Natural killer cell (primary cell): ENCODE measurements at regions of chr7 and their contacts with region 1.

Region 1: DNA sequence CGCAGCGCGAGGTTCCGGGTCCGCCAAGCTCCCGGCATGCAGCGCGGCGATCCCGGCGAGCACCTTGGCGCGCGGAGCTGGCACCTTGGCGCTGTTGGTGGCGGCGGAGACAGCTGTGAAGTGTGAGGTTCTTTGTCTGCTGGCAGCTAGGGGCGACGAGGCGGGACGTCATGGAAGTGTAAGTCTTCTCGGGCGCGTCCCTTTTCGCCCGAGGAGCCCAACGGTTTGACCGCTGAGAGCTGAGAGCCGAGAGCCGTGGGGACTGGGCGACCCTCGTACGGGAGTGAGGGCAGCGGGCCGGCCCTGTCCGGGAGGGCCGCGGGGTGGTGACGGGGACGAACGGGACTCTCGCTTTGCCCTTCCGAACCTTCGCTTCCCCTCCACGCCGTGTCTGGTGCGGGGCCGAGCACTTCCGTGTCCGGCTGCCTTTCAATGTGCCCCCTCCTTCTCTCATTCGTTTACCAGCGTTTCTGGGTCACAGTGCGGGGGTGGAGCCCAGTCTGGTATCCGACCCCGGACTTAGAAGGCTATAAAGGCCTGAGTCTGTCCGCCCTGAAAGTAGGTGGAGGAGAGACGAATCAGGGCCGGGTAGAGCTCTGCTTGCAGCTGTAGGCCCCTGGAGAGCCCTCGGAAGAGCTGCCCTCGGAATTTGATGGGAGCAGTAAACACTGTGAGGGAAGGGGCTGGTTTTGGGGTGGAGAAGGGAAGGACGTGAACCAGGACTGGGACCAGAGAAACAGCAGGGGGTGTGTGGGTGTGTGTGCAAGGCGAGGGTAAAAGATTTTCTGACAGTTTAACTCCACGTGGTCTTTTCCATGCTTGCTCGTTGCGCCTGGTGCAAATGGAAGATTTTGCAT is at the start of gene CRCP:
- DNase-seq: peak; percentile 86 to 93
- ATAC-seq: peak; percentile 81 to 93 (median 84)
- H3K4me3 ChIP-seq: peak within 1 kb of the TSS; percentile 69
- H3K4me3 Mint-ChIP-seq: peak within 1 kb of the TSS; percentile 98
- H3K27ac ChIP-seq: peak within 1 kb of the TSS; percentile 83
- H3K27ac Mint-ChIP-seq: peak within 1 kb of the TSS; percentile 99 to 100
- H3K4me1 ChIP-seq: peaks cover 20% of the 10 kb centered on the region
- H3K4me1 Mint-ChIP-seq: peaks cover 42 to 45% of the 10 kb centered on the region in 2 donors
- H3K27me3 ChIP-seq: no peaks in the 10 kb centered on the region
- H3K27me3 Mint-ChIP-seq: no peaks in the 10 kb centered on the region
- CTCF ChIP-seq: peak; percentile 19
- total RNA-seq, gene CRCP: 67.5 to 72.1 (median 68.0) TPM

Region 2: DNA sequence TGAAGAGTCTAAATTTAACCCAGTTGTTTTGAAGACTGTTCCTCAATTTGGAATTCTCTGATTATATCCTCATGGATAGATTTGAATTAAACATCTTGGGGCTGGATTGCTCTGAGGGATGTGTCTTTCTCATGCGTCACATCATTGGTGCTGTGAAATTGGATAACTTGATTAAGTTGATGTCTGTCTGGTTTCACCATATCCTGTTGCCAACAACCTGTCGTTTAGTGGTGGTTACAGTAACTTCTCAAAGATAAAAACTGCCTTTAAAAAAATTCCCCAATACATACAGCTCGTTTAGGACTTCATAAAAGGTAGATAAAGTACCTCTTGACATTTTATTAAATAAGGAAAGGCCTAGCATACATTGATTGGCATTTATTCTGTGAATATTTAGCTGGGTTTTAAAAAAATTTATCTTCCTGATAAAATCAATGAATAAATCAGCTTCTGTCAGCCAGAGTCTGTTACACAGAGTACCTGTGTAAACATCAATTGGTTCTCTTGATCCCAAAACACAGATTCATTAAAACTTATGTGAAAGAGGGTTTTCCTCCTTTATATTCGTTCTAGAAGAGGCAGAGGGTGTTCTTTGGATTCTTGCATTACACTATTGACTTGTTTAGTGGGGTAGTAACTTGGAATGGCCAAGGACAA is 10.2 kb after region 1 on chr7:
- intact Hi-C with region 1: loop called (anchors 1 kb)
- DNase-seq: peak in 1 of 2 donors; percentile 14
- ATAC-seq: peak; percentile 48 to 51 (median 50)
- H3K4me3 ChIP-seq: no peak overlapping the region
- H3K4me3 Mint-ChIP-seq: peak overlapping the region; percentile 68
- H3K27ac ChIP-seq: peak overlapping the region; percentile 85
- H3K27ac Mint-ChIP-seq: peak overlapping the region; percentile 94 to 99
- H3K4me1 ChIP-seq: peaks cover 7% of the 10 kb centered on the region
- H3K4me1 Mint-ChIP-seq: peaks cover 37 to 41% of the 10 kb centered on the region in 2 donors
- H3K27me3 ChIP-seq: no peaks in the 10 kb centered on the region
- H3K27me3 Mint-ChIP-seq: no peaks in the 10 kb centered on the region
- CTCF ChIP-seq: no peak

Region 3: GRCh38 chr7:66150471-66150870 is 35.5 kb after region 1 on chr7:
- intact Hi-C with region 1: loop called (anchors 1 kb)
- DNase-seq: peak in 1 of 2 donors; percentile 17
- ATAC-seq: no peak
- H3K4me3 ChIP-seq: no peak overlapping the region
- H3K4me3 Mint-ChIP-seq: no peak overlapping the region
- H3K27ac ChIP-seq: peak overlapping the region; percentile 42
- H3K27ac Mint-ChIP-seq: peak overlapping the region; percentile 95 to 96
- H3K4me1 ChIP-seq: peaks cover 36% of the 10 kb centered on the region
- H3K4me1 Mint-ChIP-seq: peaks cover 41 to 42% of the 10 kb centered on the region in 2 donors
- H3K27me3 ChIP-seq: no peaks in the 10 kb centered on the region
- H3K27me3 Mint-ChIP-seq: no peaks in the 10 kb centered on the region
- CTCF ChIP-seq: no peak

Region 4: DNA sequence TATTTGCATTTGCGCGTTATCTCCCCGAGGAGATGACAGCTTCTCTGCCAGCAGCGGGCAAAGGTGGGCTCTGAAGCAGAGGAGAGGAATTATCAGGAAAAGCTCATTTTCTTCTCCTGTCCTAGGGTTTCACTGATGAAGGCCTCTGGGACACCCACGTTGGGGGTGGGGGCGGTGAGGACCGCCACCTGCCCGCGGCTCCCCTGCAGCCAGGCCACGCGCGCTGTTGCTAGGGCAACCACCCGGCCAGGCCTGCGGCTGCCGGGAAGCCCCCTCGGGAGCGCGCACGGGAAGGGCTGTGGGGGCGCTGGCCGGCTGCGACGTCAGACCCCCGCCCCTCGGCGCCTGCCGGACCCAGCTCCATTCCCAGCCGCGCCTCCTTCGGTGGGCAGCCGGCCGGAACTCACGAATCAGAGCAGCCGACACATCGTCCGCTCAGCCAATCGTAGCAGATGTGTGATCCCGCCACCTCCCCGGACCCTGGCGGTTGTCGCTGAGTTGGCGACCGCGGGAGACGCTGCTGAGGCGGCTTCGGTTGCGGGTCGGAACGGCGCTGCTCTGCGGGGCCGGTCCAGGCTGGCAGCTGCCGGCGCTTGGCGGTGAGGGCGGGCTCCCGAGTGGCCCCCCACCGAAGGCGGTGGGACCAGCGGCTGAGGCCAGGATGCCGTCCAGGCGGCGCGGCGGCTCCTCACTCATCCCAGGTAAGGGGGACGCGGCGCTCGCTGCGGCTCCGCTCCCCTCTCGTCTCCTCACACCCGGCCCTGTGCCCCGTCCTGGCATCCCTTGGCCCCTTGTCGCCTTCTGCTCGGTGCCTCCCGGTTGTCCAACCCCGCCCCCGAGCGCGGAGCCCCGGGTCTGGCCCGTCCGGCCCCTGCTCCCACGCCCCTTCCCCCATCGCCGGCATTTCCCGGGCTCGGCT is 90.1 kb after region 1 on chr7 and contains the start of gene TPST1:
- intact Hi-C with region 1: loop called (anchors 10 kb)
- DNase-seq: peak; percentile 88
- ATAC-seq: peak; percentile 88 to 92 (median 90)
- H3K4me3 ChIP-seq: peak within 1 kb of the TSS; percentile 59
- H3K4me3 Mint-ChIP-seq: peak within 1 kb of the TSS; percentile 96
- H3K27ac ChIP-seq: peak within 1 kb of the TSS; percentile 46
- H3K27ac Mint-ChIP-seq: peak within 1 kb of the TSS; percentile 84
- H3K4me1 ChIP-seq: peaks cover 16% of the 10 kb centered on the region
- H3K4me1 Mint-ChIP-seq: peaks cover 27% of the 10 kb centered on the region in 2 donors
- H3K27me3 ChIP-seq: peaks cover 2% of the 10 kb centered on the region
- H3K27me3 Mint-ChIP-seq: peaks cover 0 to 2% of the 10 kb centered on the region in 2 donors
- CTCF ChIP-seq: peak; percentile 55
- total RNA-seq, gene TPST1: 10.4 to 17.3 (median 14.3) TPM

Region 5: DNA sequence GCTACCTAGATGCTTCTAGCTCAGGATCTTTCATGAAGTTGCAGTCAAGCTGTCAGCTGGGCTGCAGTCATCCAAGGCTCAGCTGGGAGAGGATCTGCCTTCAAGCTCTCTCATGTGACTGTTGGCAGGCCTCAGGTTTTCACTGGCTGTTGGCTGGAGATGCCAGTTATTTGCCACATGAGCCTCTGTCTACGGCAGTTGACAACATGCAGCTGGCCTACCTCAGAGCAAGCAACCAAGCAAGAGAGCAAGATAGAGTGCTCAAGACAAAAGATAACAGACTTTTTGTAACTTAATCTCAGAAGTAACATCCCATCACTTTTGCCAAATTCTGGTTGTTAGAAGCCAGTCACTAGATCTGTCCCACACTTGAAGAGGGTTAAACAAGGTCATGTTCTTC is 215.9 kb after region 1 on chr7:
- intact Hi-C with region 1: no loop called
- DNase-seq: no peak
- ATAC-seq: no peak
- H3K4me3 ChIP-seq: no peak overlapping the region
- H3K4me3 Mint-ChIP-seq: no peak overlapping the region
- H3K27ac ChIP-seq: no peak overlapping the region
- H3K27ac Mint-ChIP-seq: no peak overlapping the region
- H3K4me1 ChIP-seq: no peaks in the 10 kb centered on the region
- H3K4me1 Mint-ChIP-seq: no peaks in the 10 kb centered on the region
- H3K27me3 ChIP-seq: no peaks in the 10 kb centered on the region
- H3K27me3 Mint-ChIP-seq: no peaks in the 10 kb centered on the region
- CTCF ChIP-seq: no peak